Caco-2 (cell line): ENCODE measurements at regions of chrX and their contacts with region 1.

Region 1: DNA sequence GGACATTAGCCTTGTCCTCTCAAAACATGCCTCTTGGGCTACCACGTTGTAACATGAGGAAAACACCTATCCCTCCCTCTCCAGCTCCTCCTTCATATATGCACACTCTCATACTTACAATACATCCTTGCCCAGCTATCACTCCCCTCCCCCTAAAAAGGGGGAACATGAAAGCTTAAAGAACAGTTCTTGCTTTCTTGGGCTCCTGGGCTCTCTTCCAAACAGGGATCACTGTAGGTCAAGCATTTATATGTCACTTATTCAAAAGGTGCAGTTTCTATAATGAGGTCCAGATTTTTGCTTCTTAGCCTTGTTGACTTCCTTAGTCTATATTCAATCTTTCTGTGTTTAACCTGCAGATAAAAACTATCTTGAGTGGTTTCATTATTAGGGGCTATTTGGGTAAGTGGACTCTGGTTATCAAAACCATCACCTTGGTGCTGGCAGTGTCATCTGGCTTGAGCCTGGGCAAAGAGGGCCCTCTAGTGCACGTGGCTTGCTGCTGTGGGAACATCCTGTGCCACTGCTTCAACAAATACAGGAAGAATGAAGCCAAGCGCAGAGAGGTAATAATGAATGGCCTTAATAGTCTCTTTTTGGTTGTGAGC is 119.4 kb downstream of the AKAP4 start:
- DNase-seq: peak; percentile 53
- H3K4me3 ChIP-seq: no peak overlapping the region
- H3K4me3 Mint-ChIP-seq: no peak overlapping the region
- H3K27ac Mint-ChIP-seq: no peak overlapping the region
- H3K4me1 ChIP-seq: peaks cover under 1% of the 10 kb centered on the region; the same call in 1 of the 2 replicates
- H3K4me1 Mint-ChIP-seq: peaks cover 21% of the 10 kb centered on the region
- H3K27me3 ChIP-seq: no peaks in the 10 kb centered on the region
- H3K27me3 Mint-ChIP-seq: no peaks in the 10 kb centered on the region
- CTCF ChIP-seq: peak in 1 of 2 experiments; percentile 60

Region 2: GRCh38 chrX:49915361-49916222 is 165.8 kb before region 1 on chrX:
- CTCF ChIA-PET with region 1: no interaction called
- POLR2A ChIA-PET with region 1: no interaction called
- intact Hi-C with region 1: loop called (anchors 1 kb)
- DNase-seq: peak; percentile 45 to 56
- H3K4me3 ChIP-seq: no peak overlapping the region
- H3K4me3 Mint-ChIP-seq: no peak overlapping the region
- H3K27ac Mint-ChIP-seq: no peak overlapping the region
- H3K4me1 ChIP-seq: peaks cover 4% of the 10 kb centered on the region; the same call in 1 of the 2 replicates
- H3K4me1 Mint-ChIP-seq: peaks cover 10% of the 10 kb centered on the region
- H3K27me3 ChIP-seq: no peaks in the 10 kb centered on the region
- H3K27me3 Mint-ChIP-seq: no peaks in the 10 kb centered on the region
- CTCF ChIP-seq: peak; percentile 62 to 80

Region 3: DNA sequence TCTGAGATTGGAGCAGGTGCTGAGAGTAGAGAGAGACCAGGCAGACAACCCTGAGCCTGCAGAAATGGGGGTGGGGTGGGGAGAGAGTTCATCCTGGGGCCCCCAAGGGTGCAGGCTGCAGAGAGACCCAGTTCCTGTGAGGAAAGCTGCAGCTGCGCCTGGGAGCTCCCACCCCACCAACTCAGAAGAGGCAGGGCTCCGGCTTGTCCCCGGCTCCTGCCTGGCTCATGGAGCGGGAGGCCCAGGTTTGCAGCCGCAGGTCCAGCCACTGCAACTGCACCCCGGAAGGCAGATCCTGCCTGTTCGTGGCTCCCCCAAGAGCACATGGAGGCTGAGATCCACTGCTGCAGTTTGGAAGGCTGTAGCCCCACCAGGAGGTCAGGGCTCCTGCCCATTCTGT is 433.4 kb after region 1 on chrX:
- CTCF ChIA-PET with region 1: no interaction called
- POLR2A ChIA-PET with region 1: no interaction called
- intact Hi-C with region 1: no loop called
- DNase-seq: no peak
- H3K4me3 ChIP-seq: no peak overlapping the region
- H3K4me3 Mint-ChIP-seq: no peak overlapping the region
- H3K27ac Mint-ChIP-seq: no peak overlapping the region
- H3K4me1 ChIP-seq: no peaks in the 10 kb centered on the region
- H3K4me1 Mint-ChIP-seq: no peaks in the 10 kb centered on the region
- H3K27me3 ChIP-seq: no peaks in the 10 kb centered on the region
- H3K27me3 Mint-ChIP-seq: peaks cover 7% of the 10 kb centered on the region
- CTCF ChIP-seq: no peak